Naive thymus-derived CD8-positive, alpha-beta T cell (primary cell): ENCODE measurements at regions of chr6 and their contacts with region 1.

Region 1: DNA sequence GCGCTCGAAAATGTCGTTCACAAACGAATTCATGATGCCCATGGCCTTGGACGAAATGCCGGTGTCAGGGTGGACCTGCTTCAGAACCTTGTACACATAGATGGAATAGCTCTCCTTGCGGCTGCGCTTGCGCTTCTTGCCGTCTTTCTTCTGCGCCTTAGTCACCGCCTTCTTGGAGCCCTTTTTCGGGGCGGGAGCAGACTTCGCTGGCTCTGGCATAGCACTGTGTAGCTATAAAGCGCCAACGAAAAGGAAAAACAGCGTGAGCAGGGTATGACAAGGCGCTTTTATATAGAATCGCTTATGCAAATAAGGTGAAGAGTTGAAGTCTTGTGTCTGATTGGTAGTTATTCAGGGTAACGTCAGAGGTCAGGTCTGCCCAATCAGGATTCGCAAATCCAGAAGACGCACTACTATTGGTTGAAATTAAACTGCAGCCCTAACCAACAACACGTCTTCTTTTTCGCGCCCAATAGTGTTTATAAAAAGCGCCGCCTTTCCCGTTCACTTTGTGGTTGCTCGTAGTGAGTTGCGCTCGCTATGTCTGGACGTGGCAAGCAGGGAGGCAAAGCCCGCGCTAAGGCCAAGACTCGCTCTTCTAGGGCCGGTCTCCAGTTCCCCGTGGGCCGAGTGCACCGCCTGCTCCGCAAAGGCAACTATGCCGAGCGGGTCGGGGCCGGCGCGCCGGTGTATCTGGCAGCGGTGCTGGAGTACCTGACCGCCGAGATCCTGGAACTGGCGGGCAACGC is 114.8 kb upstream of the PRSS16 start:
- DNase-seq: peak; percentile 69 to 98 (median 94)
- ATAC-seq: peak; percentile 84
- H3K4me3 Mint-ChIP-seq: no peak overlapping the region
- H3K27ac Mint-ChIP-seq: no peak overlapping the region
- H3K4me1 Mint-ChIP-seq: peaks cover 5 to 20% (median 10%) of the 10 kb centered on the region in 4 donors
- H3K27me3 Mint-ChIP-seq: no peaks in the 10 kb centered on the region

Region 2: DNA sequence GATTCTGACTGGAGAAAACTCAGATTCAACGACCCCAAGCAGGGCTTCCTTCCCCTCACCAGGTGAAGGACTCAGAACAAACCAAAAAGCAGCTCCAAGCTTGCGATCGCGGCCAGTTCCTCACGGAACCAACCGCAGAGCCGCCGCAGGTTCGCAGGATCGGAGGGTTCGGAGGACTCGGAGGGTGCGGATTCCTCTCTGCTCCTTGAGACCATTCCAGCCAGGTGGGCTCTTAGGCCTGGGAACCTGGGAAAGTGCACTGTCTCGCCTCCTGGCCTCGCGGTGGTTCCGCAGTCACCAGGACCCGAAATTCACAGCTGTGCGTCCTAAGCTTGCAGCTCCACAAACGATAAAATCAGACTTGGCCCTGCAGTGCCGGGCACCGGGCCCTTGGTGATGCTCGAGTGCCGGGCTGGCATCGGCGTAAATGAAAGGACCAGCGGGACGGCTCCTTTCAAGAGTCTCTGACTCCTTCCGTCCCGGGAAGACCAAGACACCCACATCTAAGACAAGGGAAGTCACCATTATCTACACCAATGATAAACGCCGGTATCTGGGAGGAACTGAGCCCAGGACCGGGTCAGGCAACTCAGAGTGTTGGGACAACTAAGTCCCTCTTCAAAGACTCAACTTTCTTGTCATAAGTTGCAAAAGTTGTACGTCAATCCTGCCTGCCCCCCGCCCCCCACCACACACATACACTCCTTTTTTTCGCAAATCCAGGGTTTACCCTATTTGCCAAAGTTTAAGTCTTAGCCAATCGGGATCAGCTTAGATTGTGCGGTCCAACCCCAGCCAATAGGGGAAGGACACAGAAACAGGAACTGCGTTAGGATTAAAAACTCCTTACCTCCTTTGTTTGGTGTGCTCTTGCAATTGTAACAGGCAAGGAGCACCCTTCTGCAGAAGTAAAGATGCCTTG is 45.0 kb after region 1 on chr6:
- POLR2A ChIA-PET with region 1: interaction called, 12 read pairs
- DNase-seq: peak; percentile 52 to 83 (median 66)
- ATAC-seq: peak; percentile 76 to 82
- H3K4me3 Mint-ChIP-seq: peak overlapping the region; percentile 90 to 98 (median 97)
- H3K27ac Mint-ChIP-seq: peak overlapping the region; percentile 86 to 99 (median 92)
- H3K4me1 Mint-ChIP-seq: peaks cover 3 to 23% (median 16%) of the 10 kb centered on the region in 4 donors
- H3K27me3 Mint-ChIP-seq: peaks cover 0 to 7% (median 2%) of the 10 kb centered on the region in 5 donors

Region 3: GRCh38 chr6:27213544-27214125 is 80.9 kb after region 1 on chr6:
- POLR2A ChIA-PET with region 1: no interaction called
- DNase-seq: no peak
- ATAC-seq: no peak
- H3K4me3 Mint-ChIP-seq: no peak overlapping the region
- H3K27ac Mint-ChIP-seq: no peak overlapping the region
- H3K4me1 Mint-ChIP-seq: peaks cover 0 to 4% (median 2%) of the 10 kb centered on the region in 4 donors
- H3K27me3 Mint-ChIP-seq: peaks cover 19 to 71% (median 57%) of the 10 kb centered on the region in 5 donors

Region 4: GRCh38 chr6:27809939-27810767 is 677.4 kb after region 1 on chr6:
- POLR2A ChIA-PET with region 1: interaction called, 64 read pairs
- DNase-seq: peak; percentile 58 to 95 (median 84)
- ATAC-seq: peak; percentile 63 to 65
- H3K4me3 Mint-ChIP-seq: peak overlapping the region; percentile 90 to 97 (median 96)
- H3K27ac Mint-ChIP-seq: peak overlapping the region; percentile 97 to 99 (median 98)
- H3K4me1 Mint-ChIP-seq: peaks cover 32 to 72% (median 47%) of the 10 kb centered on the region in 4 donors
- H3K27me3 Mint-ChIP-seq: no peaks in the 10 kb centered on the region

Region 5: GRCh38 chr6:27838058-27838944 is 705.6 kb after region 1 on chr6:
- POLR2A ChIA-PET with region 1: interaction called, 44 read pairs
- DNase-seq: peak; percentile 63 to 95 (median 88)
- ATAC-seq: peak; percentile 78 to 81
- H3K4me3 Mint-ChIP-seq: no peak overlapping the region
- H3K27ac Mint-ChIP-seq: no peak overlapping the region
- H3K4me1 Mint-ChIP-seq: peaks cover 8 to 36% (median 18%) of the 10 kb centered on the region in 4 donors
- H3K27me3 Mint-ChIP-seq: peaks cover 0 to 8% (median 0%) of the 10 kb centered on the region in 5 donors

Region 6: GRCh38 chr6:27871924-27872638 is 739.4 kb after region 1 on chr6:
- POLR2A ChIA-PET with region 1: interaction called, 26 read pairs
- DNase-seq: peak; percentile 57 to 99 (median 91)
- ATAC-seq: peak; percentile 78 to 79
- H3K4me3 Mint-ChIP-seq: peak overlapping the region; percentile 86 to 95 (median 92)
- H3K27ac Mint-ChIP-seq: peak overlapping the region; percentile 89 to 99 (median 96)
- H3K4me1 Mint-ChIP-seq: peaks cover 21 to 46% (median 38%) of the 10 kb centered on the region in 4 donors
- H3K27me3 Mint-ChIP-seq: no peaks in the 10 kb centered on the region